ENCODE measurements at regions of chr13 and their contacts with region 1.

Region 1: GRCh38 chr13:31029102-31029501 is 96.6 kb downstream of the TEX26 start:
- DNase-seq: no peak
- H3K4me3 ChIP-seq: no peak overlapping the region
- H3K27ac ChIP-seq: no peak overlapping the region
- H3K4me1 ChIP-seq: peaks cover 8% of the 10 kb centered on the region
- H3K27me3 ChIP-seq: peaks cover 5% of the 10 kb centered on the region
- CTCF ChIP-seq: no peak

Region 2: GRCh38 chr13:30802953-30803478 is 226.1 kb before region 1 on chr13:
- dilution Hi-C with region 1: loop called (anchors 10 kb)
- DNase-seq: no peak
- H3K4me3 ChIP-seq: peak overlapping the region in 1 of 3 experiments; percentile 9
- H3K27ac ChIP-seq: no peak overlapping the region
- H3K4me1 ChIP-seq: peaks cover 24% of the 10 kb centered on the region
- H3K27me3 ChIP-seq: no peaks in the 10 kb centered on the region
- CTCF ChIP-seq: peak; percentile 87 to 97 (median 95)

Region 3: DNA sequence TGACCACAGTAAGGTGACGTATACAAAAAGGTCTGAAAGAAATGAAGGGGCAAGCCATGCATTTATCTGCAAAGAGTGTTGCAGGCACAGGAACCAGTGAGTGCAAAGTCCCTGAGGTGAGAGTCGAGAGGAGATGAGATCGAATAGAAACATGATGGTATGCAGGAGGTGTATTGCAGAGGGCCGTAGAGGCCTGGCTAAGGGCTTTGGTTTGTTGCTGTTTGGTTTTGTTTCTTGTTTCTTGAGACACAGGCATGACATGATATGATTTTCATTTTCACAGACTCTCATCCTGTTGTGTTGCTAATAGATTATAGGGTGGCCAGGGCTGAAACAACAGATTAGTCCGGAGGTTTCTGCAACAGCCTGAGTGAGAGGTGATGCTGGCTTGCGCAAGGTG is 52.2 kb after region 1 on chr13:
- dilution Hi-C with region 1: no loop called
- DNase-seq: no peak
- H3K4me3 ChIP-seq: no peak overlapping the region
- H3K27ac ChIP-seq: no peak overlapping the region
- H3K4me1 ChIP-seq: no peaks in the 10 kb centered on the region
- H3K27me3 ChIP-seq: no peaks in the 10 kb centered on the region
- CTCF ChIP-seq: no peak

Measured in keratinocyte (primary cell).